ENCODE measurements at regions of chr2 and their contacts with region 1.

Region 1: GRCh38 chr2:68925295-68925896 is 27.3 kb downstream of the GKN2 start:
- DNase-seq: peak; percentile 68 to 78
- ATAC-seq: peak; percentile 72 to 86; a peak in 5 of 6 replicates
- H3K4me3 ChIP-seq: no peak overlapping the region
- H3K27ac ChIP-seq: peak overlapping the region in 1 of 2 experiments; percentile 72; a peak in 2 of 6 replicates
- H3K4me1 ChIP-seq: peaks cover 23% of the 10 kb centered on the region
- CTCF ChIP-seq: peak; percentile 98
- EP300 ChIP-seq: no peak
- POLR2A ChIP-seq: no peak
- RAD21 ChIP-seq: peak; percentile 97

Region 2: GRCh38 chr2:68467077-68467960 is 458.1 kb before region 1 on chr2 and contains the starts of genes APLF and FBXO48:
- CTCF ChIA-PET with region 1: interaction called, 87 read pairs
- POLR2A ChIA-PET with region 1: interaction called, 6 read pairs
- DNase-seq: peak; percentile 97 to 99
- ATAC-seq: peak; percentile 95 to 99
- H3K4me3 ChIP-seq: peak within 1 kb of the TSS; percentile 78
- H3K27ac ChIP-seq: peak within 1 kb of the TSS; percentile 85 to 92
- H3K4me1 ChIP-seq: peaks cover 22% of the 10 kb centered on the region
- CTCF ChIP-seq: no peak
- EP300 ChIP-seq: no peak
- POLR2A ChIP-seq: peak; percentile 63
- RAD21 ChIP-seq: no peak
- polyA plus RNA-seq, gene APLF: 2.1 and 2.8 TPM in 2 replicates
- polyA plus RNA-seq, gene FBXO48: 1.4 and 2.1 TPM in 2 replicates

Region 3: DNA sequence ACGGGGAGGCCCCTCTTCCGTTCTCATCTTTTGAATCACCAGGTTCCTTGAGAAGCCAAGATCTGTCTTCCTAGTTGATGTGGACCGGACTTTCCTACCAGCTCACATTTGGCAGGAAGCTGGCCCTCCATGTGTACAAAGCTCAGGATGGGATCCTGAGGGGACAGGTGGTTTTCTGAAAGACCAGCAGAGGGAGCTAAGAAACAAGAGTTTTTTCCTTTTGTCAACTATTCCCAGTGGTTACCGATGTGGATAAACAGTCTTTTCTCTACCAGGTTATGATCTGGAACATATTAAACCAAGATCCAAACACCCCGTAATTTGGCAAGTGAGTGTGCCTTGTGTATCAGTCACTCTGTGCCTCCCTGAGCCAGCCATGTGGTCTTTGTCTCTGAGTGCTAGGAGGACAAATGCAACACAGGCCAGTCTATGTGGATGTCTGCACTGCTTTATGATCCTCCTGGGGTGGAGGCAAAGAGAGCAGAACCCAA is 215.9 kb before region 1 on chr2:
- CTCF ChIA-PET with region 1: interaction called, 96 read pairs
- POLR2A ChIA-PET with region 1: interaction called, 3 read pairs
- DNase-seq: peak; percentile 62 to 70
- ATAC-seq: peak; percentile 94 to 98
- H3K4me3 ChIP-seq: no peak overlapping the region
- H3K27ac ChIP-seq: no peak overlapping the region
- H3K4me1 ChIP-seq: 0 out of 3 replicates have a peak, but pooled peaks cover 4% of the 10 kb centered on the region
- CTCF ChIP-seq: peak; percentile 89
- EP300 ChIP-seq: no peak
- POLR2A ChIP-seq: no peak
- RAD21 ChIP-seq: peak; percentile 77

Region 4: DNA sequence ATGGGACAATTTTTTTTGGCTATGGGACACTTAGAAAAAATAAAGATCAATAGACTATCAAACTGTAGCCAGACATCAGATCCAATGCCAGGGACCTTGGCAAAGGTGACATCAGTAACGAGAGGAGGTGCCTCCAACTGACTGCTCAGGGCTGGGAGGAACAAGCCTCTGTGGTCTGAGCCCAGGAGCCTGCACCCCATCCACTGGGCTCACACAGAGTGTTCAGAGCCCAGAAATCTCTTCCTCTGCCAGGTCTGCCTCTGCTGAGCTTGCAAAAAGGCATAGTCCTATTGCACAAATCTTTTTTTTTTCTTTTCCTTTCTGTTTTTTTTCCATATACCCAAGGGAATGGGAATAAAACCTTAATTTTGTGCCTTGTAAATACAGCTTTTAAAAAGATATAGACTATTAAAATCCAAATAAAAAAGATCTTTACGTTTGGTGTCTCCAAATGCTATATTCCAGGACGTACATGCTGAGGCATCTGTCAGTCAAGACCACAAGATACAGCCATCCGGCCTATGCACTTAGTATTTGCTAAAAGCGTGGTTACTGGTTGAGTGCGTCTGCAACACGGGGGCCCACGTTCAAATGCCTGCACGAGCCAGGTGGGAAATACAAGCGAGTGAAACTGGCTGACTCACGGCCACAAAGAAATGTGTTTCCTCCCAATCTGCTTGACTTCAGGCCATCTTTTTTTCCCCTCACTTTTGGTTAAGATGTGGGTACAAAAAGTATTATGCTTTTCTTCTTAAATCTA is 198.6 kb before region 1 on chr2:
- CTCF ChIA-PET with region 1: interaction called, 31 read pairs
- POLR2A ChIA-PET with region 1: no interaction called
- DNase-seq: no peak
- ATAC-seq: no peak
- H3K4me3 ChIP-seq: no peak overlapping the region
- H3K27ac ChIP-seq: no peak overlapping the region
- H3K4me1 ChIP-seq: peaks cover 5% of the 10 kb centered on the region; the same call in 1 of the 3 replicates
- CTCF ChIP-seq: no peak
- EP300 ChIP-seq: no peak
- POLR2A ChIP-seq: no peak
- RAD21 ChIP-seq: no peak

Region 5: GRCh38 chr2:68813596-68813995 is 111.8 kb before region 1 on chr2:
- CTCF ChIA-PET with region 1: interaction called, 10 read pairs
- POLR2A ChIA-PET with region 1: no interaction called
- DNase-seq: no peak
- ATAC-seq: no peak
- H3K4me3 ChIP-seq: no peak overlapping the region
- H3K27ac ChIP-seq: no peak overlapping the region
- H3K4me1 ChIP-seq: 0 out of 3 replicates have a peak, but pooled peaks cover 8% of the 10 kb centered on the region
- CTCF ChIP-seq: no peak
- EP300 ChIP-seq: no peak
- POLR2A ChIP-seq: no peak
- RAD21 ChIP-seq: no peak

Region 6: GRCh38 chr2:68901199-68901960 is 24.0 kb before region 1 on chr2:
- CTCF ChIA-PET with region 1: interaction called, 44 read pairs
- POLR2A ChIA-PET with region 1: no interaction called
- DNase-seq: no peak
- ATAC-seq: peak in 1 of 2 experiments; percentile 59; a peak in 3 of 6 replicates
- H3K4me3 ChIP-seq: no peak overlapping the region
- H3K27ac ChIP-seq: no peak overlapping the region
- H3K4me1 ChIP-seq: no peaks in the 10 kb centered on the region
- CTCF ChIP-seq: 0 out of 3 replicates have a peak, but pooled peaks have one; percentile 9
- EP300 ChIP-seq: no peak
- POLR2A ChIP-seq: no peak
- RAD21 ChIP-seq: peak; percentile 23 to 59; a peak in 2 of 5 replicates

Region 7: DNA sequence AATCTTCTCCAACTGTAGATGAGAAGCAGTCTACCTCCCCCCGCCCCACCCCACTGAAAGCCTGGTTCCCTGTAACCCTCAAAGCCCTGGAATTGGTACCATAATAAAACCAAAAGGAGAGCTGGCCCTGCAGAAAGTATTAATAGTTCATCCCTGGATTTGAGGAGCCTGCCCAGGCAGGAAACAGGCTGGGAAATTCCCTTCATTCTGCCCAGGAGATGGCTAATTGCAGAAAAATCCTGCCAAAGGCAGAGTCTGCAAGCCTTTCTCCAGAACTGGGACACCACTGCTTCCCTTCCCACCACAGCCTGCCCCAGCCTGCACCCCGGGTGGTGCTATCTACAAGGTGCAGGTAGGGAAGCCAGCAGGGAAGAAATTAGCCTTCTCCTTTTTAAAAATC is 11.0 kb after region 1 on chr2:
- CTCF ChIA-PET with region 1: interaction called, 61 read pairs
- POLR2A ChIA-PET with region 1: no interaction called
- DNase-seq: no peak
- ATAC-seq: peak; percentile 37 to 68; a peak in 3 of 6 replicates
- H3K4me3 ChIP-seq: no peak overlapping the region
- H3K27ac ChIP-seq: peak overlapping the region; percentile 1 to 72; a peak in 4 of 6 replicates
- H3K4me1 ChIP-seq: peaks cover 13% of the 10 kb centered on the region
- CTCF ChIP-seq: no peak
- EP300 ChIP-seq: no peak
- POLR2A ChIP-seq: no peak
- RAD21 ChIP-seq: no peak